ENCODE measurements at regions of chr1 and their contacts with region 1.

Region 1: DNA sequence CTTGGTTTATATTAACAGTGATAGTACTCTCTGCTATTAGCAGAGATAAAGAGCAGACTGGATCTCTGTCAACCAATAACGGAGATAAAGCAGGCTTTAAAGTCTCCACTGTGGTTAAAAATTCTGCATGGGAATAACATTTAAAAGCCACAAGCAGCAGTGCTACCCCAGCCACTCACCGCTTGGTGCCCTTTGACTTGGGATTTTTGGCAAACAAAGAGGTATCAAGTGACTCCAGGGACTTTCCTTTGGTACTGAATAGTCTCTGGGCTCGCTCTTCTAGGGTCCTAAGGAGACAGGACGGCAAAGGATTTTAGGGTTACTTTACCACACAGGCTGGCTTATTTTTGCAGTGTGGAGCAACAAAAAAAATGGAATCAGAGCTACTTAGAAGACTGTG is 11.3 kb downstream of the SF3A3 start:
- DNase-seq: no peak
- ATAC-seq: no peak
- H3K4me3 Mint-ChIP-seq: no peak overlapping the region
- H3K27ac Mint-ChIP-seq: no peak overlapping the region
- H3K4me1 Mint-ChIP-seq: no peaks in the 10 kb centered on the region
- H3K27me3 Mint-ChIP-seq: no peaks in the 10 kb centered on the region

Region 2: DNA sequence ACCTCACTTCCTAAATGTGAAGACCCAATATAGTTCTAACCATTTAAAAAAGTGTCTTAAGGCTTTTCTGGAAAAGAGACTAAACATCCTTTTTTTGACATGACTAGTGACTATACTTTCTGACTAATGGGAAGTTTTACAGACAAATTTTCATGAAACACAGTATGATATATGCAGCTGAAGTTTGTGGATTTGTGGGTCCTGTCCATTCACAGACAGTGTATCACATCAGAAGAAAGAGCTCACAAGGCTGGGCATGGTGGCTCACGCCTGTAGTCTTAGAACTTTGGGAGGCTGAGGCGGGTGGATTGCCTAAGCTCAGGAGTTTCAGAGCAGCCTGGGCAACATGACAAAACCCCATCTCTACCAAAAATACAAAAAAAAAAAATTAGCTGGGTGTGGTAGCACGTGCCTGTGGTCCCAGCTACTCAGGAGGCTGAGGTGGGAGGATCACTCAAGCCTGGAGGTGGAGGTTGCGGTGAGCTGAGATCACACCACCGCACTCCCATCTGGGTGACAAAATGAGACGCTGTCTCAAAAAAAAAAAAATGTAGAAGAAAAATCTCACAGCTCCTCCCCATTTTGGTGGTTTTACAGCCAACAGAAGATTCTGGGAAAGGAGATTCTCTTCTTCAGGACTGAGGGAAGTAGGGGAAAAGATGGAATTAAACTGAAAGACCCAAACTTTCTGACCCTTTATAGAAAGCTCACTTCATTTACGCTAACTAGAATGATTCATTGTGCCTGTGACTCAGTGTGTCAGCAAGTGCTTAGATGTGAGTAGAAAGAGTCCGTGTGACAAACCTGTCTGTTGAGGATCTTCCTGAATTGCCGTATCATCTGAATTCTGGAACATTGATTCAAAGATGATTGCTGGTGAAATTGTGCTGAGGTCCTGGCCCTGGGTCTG is 155.4 kb before region 1 on chr1:
- CTCF ChIA-PET with region 1: no interaction called
- POLR2A ChIA-PET with region 1: no interaction called
- intact Hi-C with region 1: no loop called
- DNase-seq: peak; percentile 36
- ATAC-seq: peak; percentile 82
- H3K4me3 Mint-ChIP-seq: no peak overlapping the region
- H3K27ac Mint-ChIP-seq: peak overlapping the region; percentile 82
- H3K4me1 Mint-ChIP-seq: peaks cover 23% of the 10 kb centered on the region
- H3K27me3 Mint-ChIP-seq: no peaks in the 10 kb centered on the region

Region 3: DNA sequence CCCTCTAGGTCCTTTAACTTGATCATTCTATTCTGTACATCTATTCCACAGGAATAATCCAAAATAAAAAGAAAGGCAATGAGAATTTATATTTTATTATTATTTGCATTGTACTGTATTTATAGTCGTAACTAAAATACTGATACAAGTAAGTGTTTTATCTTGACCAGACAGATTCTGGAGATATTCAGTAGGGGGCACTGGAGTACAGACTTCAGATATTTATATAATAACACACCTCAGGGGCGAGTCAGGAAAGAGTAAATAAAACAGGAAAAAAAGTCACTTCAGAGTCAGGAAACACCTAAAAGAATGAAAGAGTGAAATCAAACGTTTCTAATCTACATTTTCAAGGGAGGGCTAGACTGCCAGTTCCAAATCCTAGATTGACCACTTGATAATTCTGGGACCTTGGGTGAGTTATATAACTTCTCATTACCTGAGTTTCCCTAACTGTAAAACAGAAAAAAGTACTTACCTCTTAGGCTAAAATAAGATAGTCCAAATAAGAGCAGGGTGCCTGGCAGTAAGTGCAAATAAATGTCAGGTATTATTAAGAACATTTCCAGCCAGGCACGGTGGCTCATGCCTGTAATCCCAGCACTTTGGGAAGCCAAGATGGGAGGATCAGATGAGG is 88.0 kb before region 1 on chr1:
- CTCF ChIA-PET with region 1: no interaction called
- POLR2A ChIA-PET with region 1: no interaction called
- intact Hi-C with region 1: loop called in 1 of 2 experiments (anchors 5 kb)
- DNase-seq: no peak
- ATAC-seq: no peak
- H3K4me3 Mint-ChIP-seq: no peak overlapping the region
- H3K27ac Mint-ChIP-seq: no peak overlapping the region
- H3K4me1 Mint-ChIP-seq: no peaks in the 10 kb centered on the region
- H3K27me3 Mint-ChIP-seq: no peaks in the 10 kb centered on the region

Region 4: GRCh38 chr1:37926038-37926924 is 52.3 kb before region 1 on chr1:
- CTCF ChIA-PET with region 1: interaction called, 3 read pairs
- POLR2A ChIA-PET with region 1: no interaction called
- intact Hi-C with region 1: loop called in 1 of 2 experiments (anchors 5 kb)
- DNase-seq: peak; percentile 11
- ATAC-seq: no peak
- H3K4me3 Mint-ChIP-seq: no peak overlapping the region
- H3K27ac Mint-ChIP-seq: peak overlapping the region; percentile 23
- H3K4me1 Mint-ChIP-seq: peaks cover 43% of the 10 kb centered on the region
- H3K27me3 Mint-ChIP-seq: no peaks in the 10 kb centered on the region

Region 5: DNA sequence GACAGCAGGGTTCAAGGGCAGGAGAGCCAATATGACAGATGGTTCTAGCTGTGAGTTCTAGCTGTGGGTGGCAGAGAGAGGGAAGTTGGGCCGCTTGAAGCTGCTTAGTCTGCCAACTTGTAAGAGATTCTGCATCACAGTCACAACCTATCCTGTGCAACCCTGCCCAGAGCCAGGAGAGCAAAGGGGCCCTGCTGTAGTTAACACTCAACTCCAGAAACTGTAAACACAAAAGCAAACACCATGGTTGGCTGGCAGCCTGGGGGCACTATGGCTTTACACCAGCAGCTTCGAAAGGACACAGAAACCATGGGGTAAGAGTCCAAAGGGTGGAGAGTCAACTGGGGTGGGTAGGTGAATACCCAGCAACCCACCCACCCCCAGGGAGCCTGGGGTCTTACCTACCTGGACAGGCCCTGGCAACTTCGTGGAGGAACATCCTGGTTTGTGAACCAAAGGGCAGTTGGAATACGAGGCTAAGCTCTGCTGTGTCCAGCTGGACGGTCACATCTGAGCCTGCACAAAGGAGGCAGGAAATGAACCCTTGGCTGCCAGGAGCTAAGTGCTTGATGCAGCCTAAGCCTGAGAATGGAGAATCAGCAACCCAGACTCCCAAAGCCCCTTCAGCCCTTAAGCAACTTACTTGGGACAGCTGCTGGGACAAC is 38.1 kb before region 1 on chr1:
- CTCF ChIA-PET with region 1: no interaction called
- POLR2A ChIA-PET with region 1: no interaction called
- intact Hi-C with region 1: no loop called
- DNase-seq: no peak
- ATAC-seq: no peak
- H3K4me3 Mint-ChIP-seq: no peak overlapping the region
- H3K27ac Mint-ChIP-seq: no peak overlapping the region
- H3K4me1 Mint-ChIP-seq: peaks cover 2% of the 10 kb centered on the region
- H3K27me3 Mint-ChIP-seq: no peaks in the 10 kb centered on the region